HepG2 (cell line): ENCODE measurements at regions of chr3 and their contacts with region 1.

Region 1: DNA sequence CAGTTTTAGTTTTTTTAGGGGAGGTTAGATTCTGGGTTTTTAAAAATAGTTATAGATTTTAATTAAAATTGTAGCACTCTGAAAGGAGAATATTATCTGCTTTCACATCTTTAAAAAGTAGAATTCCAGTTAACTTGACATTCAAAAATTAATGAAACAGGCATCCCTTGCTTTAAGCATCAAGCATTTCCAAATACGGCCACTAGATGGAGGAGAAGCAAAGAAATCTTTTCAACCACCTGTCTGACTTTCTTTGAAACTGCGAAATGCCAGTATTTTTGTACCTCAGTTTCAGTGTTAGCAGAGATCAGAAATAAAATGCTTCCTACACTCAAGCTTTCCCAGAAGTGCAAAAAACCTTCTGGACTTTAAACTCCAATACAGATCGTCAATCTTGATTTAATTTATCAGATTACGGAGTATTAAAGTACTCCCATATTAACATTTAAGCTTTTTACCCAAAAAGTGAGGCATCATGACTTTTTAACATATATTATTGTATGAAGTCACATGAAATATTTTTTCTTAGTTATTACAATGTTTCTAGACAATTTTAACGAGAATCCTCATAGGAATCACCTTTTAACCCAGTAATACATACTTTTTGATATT is 153.3 kb downstream of the P3H2 start:
- DNase-seq: peak; percentile 48
- ATAC-seq: peak; percentile 44; the same call in 1 of the 3 replicates
- H3K4me3 ChIP-seq: no peak overlapping the region
- H3K27ac ChIP-seq: no peak overlapping the region
- H3K4me1 ChIP-seq: no peaks in the 10 kb centered on the region
- H3K27me3 ChIP-seq: no peaks in the 10 kb centered on the region; a peak in 1 of 5 replicates
- CTCF ChIP-seq: peak; percentile 71
- EP300 ChIP-seq: no peak
- POLR2A ChIP-seq: no peak
- RAD21 ChIP-seq: no peak

Region 2: GRCh38 chr3:190003681-190004123 is 36.3 kb after region 1 on chr3:
- CTCF ChIA-PET with region 1: no interaction called
- POLR2A ChIA-PET with region 1: no interaction called
- in situ Hi-C with region 1: no loop called
- intact Hi-C with region 1: no loop called
- DNase-seq: no peak
- ATAC-seq: no peak
- H3K4me3 ChIP-seq: no peak overlapping the region
- H3K27ac ChIP-seq: no peak overlapping the region
- H3K4me1 ChIP-seq: peaks cover 17% of the 10 kb centered on the region
- H3K27me3 ChIP-seq: no peaks in the 10 kb centered on the region
- CTCF ChIP-seq: no peak
- EP300 ChIP-seq: no peak
- POLR2A ChIP-seq: no peak
- RAD21 ChIP-seq: no peak

Region 3: GRCh38 chr3:190120269-190121060 is 153.1 kb after region 1 on chr3 and contains the start of gene P3H2:
- CTCF ChIA-PET with region 1: no interaction called
- POLR2A ChIA-PET with region 1: no interaction called
- in situ Hi-C with region 1: no loop called
- intact Hi-C with region 1: loop called (anchors 2 kb)
- DNase-seq: peak; percentile 66
- ATAC-seq: peak; percentile 100
- H3K4me3 ChIP-seq: peak within 1 kb of the TSS; percentile 58 to 70 (median 65); a peak in 5 of 6 replicates
- H3K27ac ChIP-seq: no peak within 1 kb of the TSS
- H3K4me1 ChIP-seq: no peaks in the 10 kb centered on the region
- H3K27me3 ChIP-seq: peaks cover 0 to 17% of the 10 kb centered on the region in 2 experiments; a peak in 4 of 5 replicates
- CTCF ChIP-seq: peak; percentile 63
- EP300 ChIP-seq: no peak
- POLR2A ChIP-seq: no peak
- RAD21 ChIP-seq: peak; percentile 35
- total RNA-seq, gene P3H2: not detected in 2 replicates

Region 4: DNA sequence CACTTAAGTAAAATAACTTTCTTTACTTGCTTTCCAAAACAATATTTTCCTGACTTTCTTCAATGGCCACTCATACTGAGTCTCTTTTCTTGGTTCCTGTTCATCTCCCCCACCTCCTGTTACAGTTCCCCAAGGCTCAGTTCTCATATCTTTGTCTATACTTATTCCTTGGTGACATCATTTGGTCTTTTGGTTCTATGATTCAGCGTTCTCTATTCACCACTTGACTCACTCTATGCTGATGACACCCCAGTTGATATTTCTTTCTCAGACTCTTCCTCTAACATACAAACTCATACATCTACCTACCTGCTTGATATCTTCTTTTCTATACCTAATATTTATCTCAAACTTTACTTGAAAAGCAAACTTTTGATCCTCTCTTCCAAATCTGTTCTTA is 238.4 kb after region 1 on chr3:
- CTCF ChIA-PET with region 1: interaction called, 14 read pairs
- POLR2A ChIA-PET with region 1: no interaction called
- in situ Hi-C with region 1: no loop called
- intact Hi-C with region 1: loop called (anchors 1 kb)
- DNase-seq: no peak
- ATAC-seq: no peak
- H3K4me3 ChIP-seq: no peak overlapping the region
- H3K27ac ChIP-seq: no peak overlapping the region
- H3K4me1 ChIP-seq: no peaks in the 10 kb centered on the region
- H3K27me3 ChIP-seq: no peaks in the 10 kb centered on the region; a peak in 1 of 5 replicates
- CTCF ChIP-seq: no peak
- EP300 ChIP-seq: no peak
- POLR2A ChIP-seq: no peak
- RAD21 ChIP-seq: no peak